ENCODE measurements at regions of chr11 and their contacts with region 1.

Region 1: GRCh38 chr11:12893787-12894672 is 115.1 kb upstream of the RASSF10 start:
- DNase-seq: peak in 2 of 3 donors; percentile 69 to 79
- ATAC-seq: peak; percentile 52
- H3K4me3 ChIP-seq: no peak overlapping the region
- H3K4me1 ChIP-seq: no peaks in the 10 kb centered on the region
- CTCF ChIP-seq: peak; percentile 64

Region 2: GRCh38 chr11:12331239-12331874 is 562.7 kb before region 1 on chr11:
- intact Hi-C with region 1: loop called (anchors 5 kb)
- DNase-seq: peak in 2 of 3 donors; percentile 84 to 92
- ATAC-seq: peak; percentile 87
- H3K4me3 ChIP-seq: no peak overlapping the region
- H3K4me1 ChIP-seq: no peaks in the 10 kb centered on the region
- CTCF ChIP-seq: peak; percentile 18

Region 3: DNA sequence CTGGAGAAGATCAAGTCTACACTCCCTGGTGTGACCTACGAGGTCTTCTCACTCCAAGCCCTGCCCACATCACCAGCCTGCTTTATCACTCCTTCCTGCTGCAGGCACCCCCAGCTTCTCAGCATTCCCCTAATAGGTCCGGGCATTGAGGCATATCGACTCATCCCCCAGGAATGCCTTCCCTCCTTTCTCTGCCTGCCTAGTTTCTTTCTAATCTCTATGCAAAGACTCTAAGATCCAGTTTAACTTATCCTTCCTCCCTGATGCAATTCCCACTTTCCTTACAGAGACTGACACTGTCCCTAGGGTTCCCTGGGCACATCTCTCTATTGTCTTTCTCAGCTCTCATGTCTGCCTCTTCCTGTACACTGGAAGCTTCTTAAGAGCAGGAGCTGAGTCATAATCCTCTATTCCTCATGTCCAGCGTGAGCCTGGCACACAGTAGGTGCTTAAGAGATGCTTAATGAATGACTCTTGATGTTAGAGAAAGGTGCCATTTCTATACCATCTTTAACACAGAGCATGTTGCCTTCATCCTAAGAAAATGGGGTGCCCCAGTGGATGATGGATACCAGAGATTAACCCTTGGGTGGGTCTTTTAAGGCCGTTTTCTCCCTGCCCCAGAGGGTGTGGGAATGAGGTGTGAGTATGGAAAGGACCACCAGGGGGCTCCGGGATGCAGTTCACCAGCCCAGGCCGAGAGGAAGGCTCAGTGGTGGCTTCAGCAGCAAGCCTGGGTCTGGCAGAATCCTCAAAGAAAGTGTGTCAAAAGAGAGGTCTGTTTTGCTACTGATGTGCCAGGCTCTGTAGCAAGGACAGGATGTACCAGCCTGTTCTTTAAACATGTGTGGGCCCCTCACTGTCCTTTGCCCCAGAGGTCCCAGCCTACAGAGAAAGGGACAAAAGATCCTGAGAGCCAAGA is 482.0 kb before region 1 on chr11:
- intact Hi-C with region 1: loop called in 1 of 2 experiments (anchors 5 kb)
- DNase-seq: peak in 2 of 3 donors; percentile 59 to 65
- ATAC-seq: peak; percentile 82
- H3K4me3 ChIP-seq: no peak overlapping the region
- H3K4me1 ChIP-seq: peaks cover 5% of the 10 kb centered on the region
- CTCF ChIP-seq: peak; percentile 18

Region 4: GRCh38 chr11:12618743-12619540 is 275.1 kb before region 1 on chr11:
- intact Hi-C with region 1: no loop called
- DNase-seq: no peak
- ATAC-seq: no peak
- H3K4me3 ChIP-seq: no peak overlapping the region
- H3K4me1 ChIP-seq: no peaks in the 10 kb centered on the region
- CTCF ChIP-seq: no peak

Region 5: GRCh38 chr11:12787847-12788246 is 106.2 kb before region 1 on chr11:
- intact Hi-C with region 1: no loop called
- DNase-seq: no peak
- ATAC-seq: no peak
- H3K4me3 ChIP-seq: no peak overlapping the region
- H3K4me1 ChIP-seq: no peaks in the 10 kb centered on the region
- CTCF ChIP-seq: no peak

Region 6: GRCh38 chr11:12841946-12842630 is 51.9 kb before region 1 on chr11:
- intact Hi-C with region 1: no loop called
- DNase-seq: no peak
- ATAC-seq: no peak
- H3K4me3 ChIP-seq: no peak overlapping the region
- H3K4me1 ChIP-seq: peaks cover 31% of the 10 kb centered on the region
- CTCF ChIP-seq: no peak